Activated CD4-positive, alpha-beta T cell treated with anti-CD3 and anti-CD28 coated beads for 36 hours (primary cell): ENCODE measurements at regions of chr1 and their contacts with region 1.

Region 1: GRCh38 chr1:182595641-182596240 is 6.7 kb upstream of the RNASEL start:
- DNase-seq: peak; percentile 83
- ATAC-seq: peak; percentile 68
- H3K4me3 Mint-ChIP-seq: no peak overlapping the region
- H3K27ac Mint-ChIP-seq: no peak overlapping the region
- H3K4me1 Mint-ChIP-seq: peaks cover 11% of the 10 kb centered on the region
- H3K27me3 Mint-ChIP-seq: no peaks in the 10 kb centered on the region

Region 2: GRCh38 chr1:182446033-182446669 is 149.6 kb before region 1 on chr1:
- CTCF ChIA-PET with region 1: interaction called, 6 read pairs
- POLR2A ChIA-PET with region 1: no interaction called
- intact Hi-C with region 1: loop called (anchors 2 to 5 kb)
- DNase-seq: peak; percentile 45
- ATAC-seq: peak; percentile 66
- H3K4me3 Mint-ChIP-seq: no peak overlapping the region
- H3K27ac Mint-ChIP-seq: no peak overlapping the region
- H3K4me1 Mint-ChIP-seq: peaks cover 2% of the 10 kb centered on the region
- H3K27me3 Mint-ChIP-seq: no peaks in the 10 kb centered on the region

Region 3: DNA sequence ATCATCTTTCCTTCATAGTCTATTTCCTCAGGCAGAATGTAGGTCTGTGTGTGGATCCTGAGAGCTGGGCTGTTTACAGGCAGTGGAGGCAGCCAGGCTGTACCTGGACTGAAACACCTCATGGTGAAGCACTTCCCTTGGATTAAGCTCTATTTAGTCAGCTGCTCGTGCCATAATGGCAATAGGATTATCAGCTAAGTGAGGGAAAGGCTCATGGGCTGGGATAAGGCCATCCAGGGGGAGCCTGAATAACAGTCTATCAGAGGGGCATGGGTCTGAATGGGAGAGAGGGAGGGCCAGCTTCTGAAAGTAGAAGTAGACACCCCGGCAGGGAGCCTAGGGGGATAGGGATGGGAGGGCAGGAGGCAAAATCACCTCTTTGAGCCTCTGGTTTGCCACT is 15.0 kb before region 1 on chr1:
- CTCF ChIA-PET with region 1: interaction called, 39 read pairs
- POLR2A ChIA-PET with region 1: interaction called, 3 read pairs
- intact Hi-C with region 1: no loop called
- DNase-seq: no peak
- ATAC-seq: no peak
- H3K4me3 Mint-ChIP-seq: no peak overlapping the region
- H3K27ac Mint-ChIP-seq: no peak overlapping the region
- H3K4me1 Mint-ChIP-seq: peaks cover 48% of the 10 kb centered on the region
- H3K27me3 Mint-ChIP-seq: no peaks in the 10 kb centered on the region

Region 4: DNA sequence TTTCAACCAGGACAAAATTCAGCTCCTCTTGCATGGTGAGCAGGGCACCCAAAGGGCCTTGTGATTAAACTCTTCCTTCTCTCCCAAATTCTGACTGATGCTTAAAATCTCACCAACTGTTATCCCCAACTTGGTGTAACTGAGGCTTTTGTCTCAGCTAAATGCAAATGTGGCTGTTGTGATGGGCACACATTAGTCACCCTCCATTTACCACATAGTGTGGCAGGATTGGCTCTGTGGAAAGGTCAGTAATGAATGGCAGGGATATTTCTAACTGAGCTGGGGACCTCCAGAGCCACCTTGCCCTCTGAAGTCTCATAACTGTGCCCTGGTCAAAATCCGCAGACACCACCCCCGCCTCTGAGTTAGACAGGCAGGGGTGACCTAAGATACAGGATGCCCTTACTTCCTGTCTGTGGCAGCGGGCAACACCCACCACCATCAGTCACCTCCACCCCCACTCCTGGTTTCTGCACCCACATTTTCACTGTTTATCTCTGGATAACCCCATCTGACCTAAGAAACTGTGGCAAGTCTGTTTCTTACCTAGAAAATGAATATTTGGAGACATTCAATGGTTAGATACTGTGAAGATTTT is 33.9 kb after region 1 on chr1:
- CTCF ChIA-PET with region 1: interaction called, 11 read pairs
- POLR2A ChIA-PET with region 1: no interaction called
- intact Hi-C with region 1: no loop called
- DNase-seq: peak; percentile 80
- ATAC-seq: peak; percentile 85
- H3K4me3 Mint-ChIP-seq: peak overlapping the region; percentile 28
- H3K27ac Mint-ChIP-seq: peak overlapping the region; percentile 47
- H3K4me1 Mint-ChIP-seq: peaks cover 59% of the 10 kb centered on the region
- H3K27me3 Mint-ChIP-seq: peaks cover 10% of the 10 kb centered on the region

Region 5: DNA sequence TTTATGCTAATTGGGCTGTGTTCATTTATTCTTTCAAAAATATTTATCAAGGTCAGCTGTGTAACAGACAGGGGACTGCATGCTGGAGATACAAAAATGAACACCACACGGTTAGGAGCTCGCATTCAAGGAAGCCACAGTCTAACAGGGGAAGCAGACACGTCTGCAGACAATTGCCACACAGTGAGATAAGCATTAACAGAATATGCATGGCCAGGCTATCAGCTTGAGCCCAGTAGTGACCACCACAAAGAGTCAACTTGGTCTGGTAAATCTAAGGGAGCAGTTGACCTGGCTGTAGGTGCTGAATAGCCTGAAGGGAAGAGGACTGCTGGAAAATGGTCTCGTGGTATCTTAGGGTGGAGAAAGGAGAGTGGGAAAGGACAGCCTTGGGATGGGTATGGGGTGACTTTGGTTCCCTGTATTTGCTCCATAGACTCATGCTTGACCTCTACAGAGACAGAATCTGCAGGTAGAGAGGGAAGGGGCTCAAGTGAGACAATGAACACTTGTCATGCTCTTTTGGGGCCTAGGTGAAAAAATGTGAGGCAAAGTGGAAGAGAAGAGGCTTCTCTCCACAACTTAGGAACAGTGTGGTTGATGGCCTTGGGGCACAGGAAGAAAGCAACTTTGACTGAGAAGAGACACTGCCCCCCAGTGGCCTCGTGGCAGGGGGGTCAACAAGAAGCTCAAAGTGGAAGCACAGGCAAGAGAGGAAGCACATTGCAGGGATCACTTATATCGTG is 186.3 kb after region 1 on chr1:
- CTCF ChIA-PET with region 1: interaction called, 772 read pairs
- POLR2A ChIA-PET with region 1: no interaction called
- intact Hi-C with region 1: loop called (anchors 1 kb)
- DNase-seq: peak; percentile 86
- ATAC-seq: peak; percentile 77
- H3K4me3 Mint-ChIP-seq: no peak overlapping the region
- H3K27ac Mint-ChIP-seq: no peak overlapping the region
- H3K4me1 Mint-ChIP-seq: peaks cover 3% of the 10 kb centered on the region
- H3K27me3 Mint-ChIP-seq: no peaks in the 10 kb centered on the region

Region 6: GRCh38 chr1:182795563-182796228 is 200.0 kb after region 1 on chr1:
- CTCF ChIA-PET with region 1: interaction called, 772 read pairs
- POLR2A ChIA-PET with region 1: no interaction called
- intact Hi-C with region 1: no loop called
- DNase-seq: no peak
- ATAC-seq: peak; percentile 33
- H3K4me3 Mint-ChIP-seq: no peak overlapping the region
- H3K27ac Mint-ChIP-seq: no peak overlapping the region
- H3K4me1 Mint-ChIP-seq: peaks cover 5% of the 10 kb centered on the region
- H3K27me3 Mint-ChIP-seq: no peaks in the 10 kb centered on the region